Vagina (tissue), 2 donors: ENCODE measurements at regions of chr3 and their contacts with region 1.

Region 1: DNA sequence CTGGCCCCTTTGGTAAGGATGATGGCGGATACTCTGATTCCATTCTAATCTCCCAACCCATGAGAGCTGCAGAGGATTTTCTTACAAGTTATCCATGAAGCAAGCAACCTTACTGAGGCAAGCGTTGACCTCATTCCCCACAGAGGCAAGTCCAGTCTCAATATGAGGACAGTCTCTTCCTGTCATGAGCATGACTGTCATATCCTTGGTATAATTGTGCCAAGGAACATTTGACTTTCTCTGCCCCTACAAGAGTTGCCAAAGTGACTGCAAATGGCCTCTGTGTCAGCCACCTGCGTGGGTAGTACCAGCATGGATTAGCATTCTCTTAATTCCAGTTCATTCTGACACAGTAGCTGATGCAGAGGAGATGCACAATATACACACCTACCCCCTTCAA is 71.2 kb upstream of the TMEM158 start:
- DNase-seq: no peak
- H3K4me3 ChIP-seq: no peak overlapping the region
- H3K27ac ChIP-seq: no peak overlapping the region
- H3K4me1 ChIP-seq: no peaks in the 10 kb centered on the region
- H3K27me3 ChIP-seq: no peaks in the 10 kb centered on the region
- CTCF ChIP-seq: no peak
- POLR2A ChIP-seq: no peak

Region 2: GRCh38 chr3:45154641-45155147 is 142.6 kb before region 1 on chr3:
- intact Hi-C with region 1: loop called (anchors 5 kb)
- DNase-seq: no peak
- H3K4me3 ChIP-seq: no peak overlapping the region
- H3K27ac ChIP-seq: no peak overlapping the region
- H3K4me1 ChIP-seq: no peaks in the 10 kb centered on the region
- H3K27me3 ChIP-seq: no peaks in the 10 kb centered on the region
- CTCF ChIP-seq: no peak
- POLR2A ChIP-seq: no peak

Region 3: DNA sequence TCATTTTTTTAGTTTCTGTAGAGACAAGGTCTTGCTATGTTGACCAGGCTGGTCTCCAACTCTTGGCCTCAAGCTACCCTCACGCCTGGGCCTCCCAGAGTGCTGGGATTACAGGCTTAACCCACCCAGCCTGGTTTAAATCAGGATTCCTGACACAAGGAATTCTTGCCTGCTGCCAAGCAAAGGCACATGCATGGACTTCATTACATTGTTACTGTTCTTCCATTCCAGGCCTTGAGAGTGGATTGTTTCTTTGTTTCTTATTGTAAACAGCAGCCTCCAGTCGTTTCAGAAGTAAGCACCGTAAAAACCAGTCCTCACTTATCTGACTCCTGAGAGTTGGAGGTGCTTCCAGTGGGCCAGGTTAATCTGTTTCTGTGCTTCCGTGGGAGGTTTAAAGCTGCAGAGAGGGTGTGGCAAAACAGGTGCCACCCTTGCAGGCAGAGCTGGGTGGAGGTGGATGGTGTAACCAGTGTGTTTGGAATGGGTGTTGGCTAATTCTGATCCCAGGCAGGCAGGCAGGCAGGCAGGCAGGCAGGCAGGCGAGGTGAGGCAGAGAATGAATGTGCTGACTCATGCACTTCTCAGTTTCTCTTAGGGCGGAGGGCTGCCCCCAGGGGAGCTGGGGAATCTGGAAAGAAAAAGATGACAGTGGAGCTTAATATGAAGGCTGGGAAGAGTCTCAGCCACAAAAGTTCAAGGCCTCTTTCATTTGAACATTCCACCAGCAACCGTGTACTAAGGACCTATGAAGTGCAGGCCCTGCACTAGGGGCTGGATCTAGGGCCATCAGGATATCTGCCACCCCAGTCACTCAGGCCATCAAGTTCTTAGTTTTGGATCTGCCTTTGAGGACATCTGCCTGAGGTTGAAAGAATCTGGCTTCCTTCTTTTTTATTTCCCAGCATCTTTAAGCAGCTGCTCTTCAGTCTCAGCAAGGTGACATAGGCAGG is 114.1 kb before region 1 on chr3:
- intact Hi-C with region 1: no loop called
- DNase-seq: no peak
- H3K4me3 ChIP-seq: no peak overlapping the region
- H3K27ac ChIP-seq: peak overlapping the region; percentile 44
- H3K4me1 ChIP-seq: peaks cover 22% of the 10 kb centered on the region
- H3K27me3 ChIP-seq: no peaks in the 10 kb centered on the region
- CTCF ChIP-seq: no peak
- POLR2A ChIP-seq: no peak